Psoas muscle (tissue), 8 donors: ENCODE measurements at regions of chr22 and their contacts with region 1.

Region 1: GRCh38 chr22:18077639-18078328 is at the start of gene PEX26:
- DNase-seq: peak; percentile 96
- ATAC-seq: peak; percentile 92 to 95 (median 94)
- H3K4me3 ChIP-seq: peak within 1 kb of the TSS; percentile 92
- H3K27ac ChIP-seq: peak within 1 kb of the TSS; percentile 96
- H3K4me1 ChIP-seq: peaks cover 35% of the 10 kb centered on the region
- H3K27me3 ChIP-seq: no peaks in the 10 kb centered on the region
- CTCF ChIP-seq: no peak
- total RNA-seq, gene PEX26: 17.6 to 23.4 (median 19.8) TPM

Region 2: GRCh38 chr22:17830043-17830961 is 247.5 kb before region 1 on chr22:
- intact Hi-C with region 1: loop called (anchors 1 to 5 kb)
- DNase-seq: peak; percentile 86 to 92
- ATAC-seq: peak; percentile 86 to 95 (median 88)
- H3K4me3 ChIP-seq: no peak overlapping the region
- H3K27ac ChIP-seq: peak overlapping the region; percentile 62
- H3K4me1 ChIP-seq: peaks cover 36% of the 10 kb centered on the region
- H3K27me3 ChIP-seq: no peaks in the 10 kb centered on the region
- CTCF ChIP-seq: peak; percentile 99

Region 3: GRCh38 chr22:17910561-17911311 is 167.0 kb before region 1 on chr22:
- intact Hi-C with region 1: loop called in 1 of 2 experiments (anchors 5 kb)
- DNase-seq: peak; percentile 86 to 93
- ATAC-seq: peak; percentile 83 to 89 (median 86)
- H3K4me3 ChIP-seq: peak overlapping the region; percentile 27
- H3K27ac ChIP-seq: peak overlapping the region; percentile 94
- H3K4me1 ChIP-seq: peaks cover 69% of the 10 kb centered on the region
- H3K27me3 ChIP-seq: no peaks in the 10 kb centered on the region
- CTCF ChIP-seq: peak; percentile 23

Region 4: GRCh38 chr22:18031695-18032454 is 45.9 kb before region 1 on chr22:
- intact Hi-C with region 1: loop called (anchors 5 kb)
- DNase-seq: peak; percentile 63 to 89
- ATAC-seq: peak; percentile 69 to 72 (median 70)
- H3K4me3 ChIP-seq: no peak overlapping the region
- H3K27ac ChIP-seq: peak overlapping the region; percentile 79
- H3K4me1 ChIP-seq: peaks cover 42% of the 10 kb centered on the region
- H3K27me3 ChIP-seq: no peaks in the 10 kb centered on the region
- CTCF ChIP-seq: no peak